ENCODE measurements at regions of chr9 and their contacts with region 1.

Region 1: DNA sequence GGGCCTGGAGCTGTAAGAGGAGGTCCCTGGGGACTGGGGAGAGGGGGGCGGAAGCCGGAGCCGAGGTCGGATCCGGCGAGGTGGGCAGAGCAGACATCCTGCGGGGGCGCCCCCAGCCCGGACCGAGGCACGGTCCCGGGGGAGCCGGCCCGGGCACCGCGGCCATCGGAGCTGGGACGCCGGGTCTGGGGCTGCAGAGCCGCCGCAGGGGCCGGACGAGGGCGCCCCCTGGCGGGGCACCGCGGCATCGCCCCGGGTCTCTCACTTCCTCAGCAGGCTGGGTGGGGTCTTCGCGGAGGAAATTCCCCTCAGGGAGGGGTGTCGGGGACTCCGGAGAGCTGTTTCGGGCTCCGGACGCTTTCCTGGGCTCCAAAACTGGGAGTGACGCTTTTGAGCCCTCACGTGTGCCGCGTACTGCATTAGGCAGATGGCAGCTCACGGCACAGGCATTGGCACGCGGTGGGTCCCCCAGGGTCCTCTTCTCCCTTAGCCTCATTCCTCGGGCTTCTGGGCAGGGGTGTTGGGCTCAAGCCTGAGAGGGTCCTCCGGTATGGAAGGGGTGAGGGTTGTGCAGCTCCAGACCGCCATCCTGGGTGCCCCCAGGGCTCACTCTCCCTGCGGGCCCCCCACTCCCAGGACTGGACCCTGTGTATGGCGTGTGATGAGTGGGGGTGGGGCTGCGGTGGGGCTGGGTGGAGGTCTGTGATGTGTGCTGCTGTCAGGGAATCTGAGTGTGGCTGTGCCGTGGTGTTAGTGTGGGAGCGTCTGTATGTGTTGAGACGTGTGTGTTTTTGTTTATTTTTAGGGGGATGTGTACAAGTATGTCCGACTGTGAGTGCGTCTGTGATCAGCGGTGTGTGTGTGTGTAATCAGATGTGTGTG is 29.6 kb downstream of the LHX2 start:
- DNase-seq: peak; percentile 79
- ATAC-seq: peak; percentile 71
- H3K4me3 Mint-ChIP-seq: peak overlapping the region; percentile 63
- H3K27ac Mint-ChIP-seq: no peak overlapping the region
- H3K4me1 Mint-ChIP-seq: peaks cover 7% of the 10 kb centered on the region; the same call in 1 of the 2 replicates
- H3K27me3 Mint-ChIP-seq: peaks cover 82% of the 10 kb centered on the region
- CTCF ChIP-seq: peak; percentile 99

Region 2: GRCh38 chr9:123401879-123402513 is 639.2 kb before region 1 on chr9:
- CTCF ChIA-PET with region 1: interaction called, 19 read pairs
- POLR2A ChIA-PET with region 1: no interaction called
- DNase-seq: peak; percentile 66
- ATAC-seq: peak; percentile 77
- H3K4me3 Mint-ChIP-seq: no peak overlapping the region
- H3K27ac Mint-ChIP-seq: peak overlapping the region; percentile 30; the same call in 1 of the 2 replicates
- H3K4me1 Mint-ChIP-seq: peaks cover 9% of the 10 kb centered on the region
- H3K27me3 Mint-ChIP-seq: no peaks in the 10 kb centered on the region
- CTCF ChIP-seq: peak; percentile 56

Region 3: GRCh38 chr9:123914517-123915195 is 126.5 kb before region 1 on chr9:
- CTCF ChIA-PET with region 1: no interaction called
- POLR2A ChIA-PET with region 1: no interaction called
- DNase-seq: no peak
- ATAC-seq: no peak
- H3K4me3 Mint-ChIP-seq: no peak overlapping the region
- H3K27ac Mint-ChIP-seq: no peak overlapping the region
- H3K4me1 Mint-ChIP-seq: peaks cover 30% of the 10 kb centered on the region
- H3K27me3 Mint-ChIP-seq: no peaks in the 10 kb centered on the region
- CTCF ChIP-seq: no peak

Region 4: GRCh38 chr9:123960366-123960765 is 80.8 kb before region 1 on chr9:
- CTCF ChIA-PET with region 1: interaction called, 29 read pairs
- POLR2A ChIA-PET with region 1: no interaction called
- DNase-seq: no peak
- ATAC-seq: peak; percentile 44; the same call in 1 of the 2 replicates
- H3K4me3 Mint-ChIP-seq: no peak overlapping the region
- H3K27ac Mint-ChIP-seq: no peak overlapping the region
- H3K4me1 Mint-ChIP-seq: peaks cover 9% of the 10 kb centered on the region
- H3K27me3 Mint-ChIP-seq: peaks cover 10% of the 10 kb centered on the region
- CTCF ChIP-seq: peak; percentile 38; the same call in 1 of the 2 replicates

Region 5: DNA sequence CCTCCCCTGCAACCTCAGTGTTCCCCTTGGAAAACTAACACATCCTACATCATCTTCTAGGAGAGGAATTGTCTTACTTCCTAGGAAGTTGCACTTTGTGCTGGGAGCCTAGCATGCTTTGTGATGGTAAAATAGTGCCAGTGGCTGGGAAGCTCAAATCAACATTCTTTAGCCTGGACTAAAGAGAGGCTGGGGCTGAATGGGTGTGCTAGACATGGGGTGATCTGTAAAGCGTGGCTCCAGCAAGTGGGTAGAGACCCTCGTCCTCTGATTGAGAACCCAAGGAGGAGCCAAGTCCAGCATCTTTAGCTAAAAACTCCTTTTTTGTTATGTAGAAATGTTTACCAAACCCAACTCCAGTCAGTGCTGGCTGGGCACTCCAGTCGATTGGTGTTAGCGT is 35.8 kb before region 1 on chr9:
- CTCF ChIA-PET with region 1: interaction called, 35 read pairs
- POLR2A ChIA-PET with region 1: no interaction called
- DNase-seq: peak; percentile 46
- ATAC-seq: peak; percentile 81
- H3K4me3 Mint-ChIP-seq: no peak overlapping the region
- H3K27ac Mint-ChIP-seq: no peak overlapping the region
- H3K4me1 Mint-ChIP-seq: peaks cover 74% of the 10 kb centered on the region
- H3K27me3 Mint-ChIP-seq: peaks cover 100% of the 10 kb centered on the region
- CTCF ChIP-seq: no peak

Region 6: GRCh38 chr9:124022201-124023121 is 18.7 kb before region 1 on chr9:
- CTCF ChIA-PET with region 1: interaction called, 35 read pairs
- POLR2A ChIA-PET with region 1: no interaction called
- DNase-seq: peak; percentile 82
- ATAC-seq: peak; percentile 89
- H3K4me3 Mint-ChIP-seq: peak overlapping the region; percentile 54
- H3K27ac Mint-ChIP-seq: no peak overlapping the region
- H3K4me1 Mint-ChIP-seq: peaks cover 37% of the 10 kb centered on the region
- H3K27me3 Mint-ChIP-seq: peaks cover 94% of the 10 kb centered on the region
- CTCF ChIP-seq: no peak

Region 7: GRCh38 chr9:124054582-124055227 is 13.5 kb after region 1 on chr9:
- CTCF ChIA-PET with region 1: interaction called, 22 read pairs
- POLR2A ChIA-PET with region 1: no interaction called
- DNase-seq: peak; percentile 8
- ATAC-seq: no peak
- H3K4me3 Mint-ChIP-seq: no peak overlapping the region
- H3K27ac Mint-ChIP-seq: no peak overlapping the region
- H3K4me1 Mint-ChIP-seq: no peaks in the 10 kb centered on the region
- H3K27me3 Mint-ChIP-seq: peaks cover 12% of the 10 kb centered on the region
- CTCF ChIP-seq: no peak

Measured in WTC11 (cell line).